ENCODE measurements at regions of chr22 and their contacts with region 1.

Region 1: DNA sequence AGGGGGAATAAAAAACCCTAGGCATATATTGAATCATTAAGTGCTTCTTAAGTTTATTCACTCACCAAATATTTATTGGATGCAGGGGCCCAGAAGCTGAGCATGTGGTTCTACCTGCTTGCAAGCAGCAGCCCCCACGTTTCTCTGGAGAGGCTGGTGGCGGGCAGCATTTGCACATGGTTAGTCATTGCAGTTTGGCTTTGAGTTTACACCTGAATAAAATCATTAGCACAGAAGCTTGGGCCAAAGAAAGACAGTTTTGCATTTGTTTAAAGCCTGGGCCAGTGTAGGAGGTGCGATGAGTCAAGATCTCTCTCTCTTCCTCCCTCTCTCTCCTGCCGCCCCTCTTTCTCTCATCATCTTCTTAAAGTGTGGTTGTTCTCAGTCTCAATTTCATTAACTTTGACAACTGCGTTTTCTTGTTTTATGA is 72.6 kb downstream of the C22orf31 start:
- DNase-seq: no peak
- ATAC-seq: peak; percentile 58
- H3K4me3 ChIP-seq: no peak overlapping the region
- H3K27ac ChIP-seq: no peak overlapping the region
- H3K4me1 ChIP-seq: no peaks in the 10 kb centered on the region
- H3K27me3 ChIP-seq: no peaks in the 10 kb centered on the region
- CTCF ChIP-seq: no peak
- EP300 ChIP-seq: 0 out of 4 replicates have a peak, but pooled peaks of 1 of the 2 experiments have one; percentile 9
- POLR2A ChIP-seq: no peak
- RAD21 ChIP-seq: no peak

Region 2: GRCh38 chr22:28978158-28978557 is 10.9 kb before region 1 on chr22:
- CTCF ChIA-PET with region 1: interaction called, 4 read pairs
- POLR2A ChIA-PET with region 1: interaction called, 9 read pairs
- RAD21 ChIA-PET with region 1: interaction called, 7 read pairs
- SMC1A ChIA-PET with region 1: interaction called, 15 read pairs
- in situ Hi-C with region 1: no loop called
- intact Hi-C with region 1: no loop called
- DNase-seq: no peak
- ATAC-seq: peak; percentile 57
- H3K4me3 ChIP-seq: no peak overlapping the region
- H3K27ac ChIP-seq: no peak overlapping the region
- H3K4me1 ChIP-seq: no peaks in the 10 kb centered on the region
- H3K27me3 ChIP-seq: 0 out of 4 replicates have a peak, but pooled peaks cover 0 to 5% of the 10 kb centered on the region in 2 experiments
- CTCF ChIP-seq: no peak
- EP300 ChIP-seq: no peak
- POLR2A ChIP-seq: no peak
- RAD21 ChIP-seq: no peak

Region 3: GRCh38 chr22:29004647-29005371 is 15.8 kb after region 1 on chr22:
- CTCF ChIA-PET with region 1: interaction called, 3 read pairs
- POLR2A ChIA-PET with region 1: interaction called, 10 read pairs
- RAD21 ChIA-PET with region 1: interaction called, 8 read pairs
- SMC1A ChIA-PET with region 1: interaction called, 40 read pairs
- in situ Hi-C with region 1: no loop called
- intact Hi-C with region 1: no loop called
- DNase-seq: no peak
- ATAC-seq: peak; percentile 44
- H3K4me3 ChIP-seq: no peak overlapping the region
- H3K27ac ChIP-seq: no peak overlapping the region
- H3K4me1 ChIP-seq: no peaks in the 10 kb centered on the region
- H3K27me3 ChIP-seq: no peaks in the 10 kb centered on the region
- CTCF ChIP-seq: no peak
- EP300 ChIP-seq: no peak
- POLR2A ChIP-seq: no peak
- RAD21 ChIP-seq: no peak

Region 4: GRCh38 chr22:29018293-29019189 is 29.5 kb after region 1 on chr22:
- CTCF ChIA-PET with region 1: no interaction called
- POLR2A ChIA-PET with region 1: interaction called, 5 read pairs
- RAD21 ChIA-PET with region 1: interaction called, 8 read pairs
- SMC1A ChIA-PET with region 1: interaction called, 10 read pairs
- in situ Hi-C with region 1: no loop called
- intact Hi-C with region 1: no loop called
- DNase-seq: no peak
- ATAC-seq: no peak
- H3K4me3 ChIP-seq: no peak overlapping the region
- H3K27ac ChIP-seq: no peak overlapping the region
- H3K4me1 ChIP-seq: no peaks in the 10 kb centered on the region
- H3K27me3 ChIP-seq: 0 out of 4 replicates have a peak, but pooled peaks cover 0 to 2% of the 10 kb centered on the region in 2 experiments
- CTCF ChIP-seq: no peak
- EP300 ChIP-seq: no peak
- POLR2A ChIP-seq: no peak
- RAD21 ChIP-seq: no peak

Region 5: GRCh38 chr22:29394931-29395581 is 406.0 kb after region 1 on chr22:
- CTCF ChIA-PET with region 1: no interaction called
- POLR2A ChIA-PET with region 1: no interaction called
- RAD21 ChIA-PET with region 1: no interaction called
- SMC1A ChIA-PET with region 1: no interaction called
- in situ Hi-C with region 1: no loop called
- intact Hi-C with region 1: no loop called
- DNase-seq: no peak
- ATAC-seq: peak; percentile 93
- H3K4me3 ChIP-seq: no peak overlapping the region
- H3K27ac ChIP-seq: no peak overlapping the region
- H3K4me1 ChIP-seq: peaks cover 9% of the 10 kb centered on the region
- H3K27me3 ChIP-seq: no peaks in the 10 kb centered on the region
- CTCF ChIP-seq: peak; percentile 85 to 97 (median 94); a peak in 5 of 6 replicates
- EP300 ChIP-seq: no peak
- POLR2A ChIP-seq: no peak
- RAD21 ChIP-seq: peak; percentile 92